Sigmoid colon (tissue), 7 donors: ENCODE measurements at regions of chr10 and their contacts with region 1.

Region 1: DNA sequence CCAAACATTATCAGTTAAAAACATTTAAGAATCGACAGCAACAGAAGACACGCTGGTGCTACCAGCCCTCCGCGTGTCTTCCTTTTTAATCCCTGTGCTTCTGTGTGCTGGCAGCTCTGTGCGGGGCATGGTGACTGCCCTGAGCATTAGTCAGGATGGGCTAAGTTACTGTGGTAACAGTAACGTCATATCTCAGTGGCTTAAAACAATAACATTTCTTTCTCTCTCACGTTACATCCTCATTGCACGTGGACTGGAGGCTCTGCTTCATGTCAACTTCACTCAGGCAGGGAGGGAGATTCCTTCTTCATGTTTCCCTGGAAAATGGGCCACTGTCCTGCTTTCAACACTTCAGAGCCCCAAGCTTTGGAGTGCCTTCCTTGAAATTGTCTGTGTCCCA is 378.5 kb downstream of the CCSER2 start:
- DNase-seq: peak; percentile 79
- H3K4me3 ChIP-seq: no peak overlapping the region
- H3K27ac ChIP-seq: peak overlapping the region in 3 of 4 donors; percentile 55 to 78 (median 73)
- H3K4me1 ChIP-seq: peaks cover 0 to 28% (median 17%) of the 10 kb centered on the region in 4 donors
- H3K27me3 ChIP-seq: no peaks in the 10 kb centered on the region
- CTCF ChIP-seq: no peak
- EP300 ChIP-seq: peak; percentile 60 to 91 (median 89)
- POLR2A ChIP-seq: no peak

Region 2: DNA sequence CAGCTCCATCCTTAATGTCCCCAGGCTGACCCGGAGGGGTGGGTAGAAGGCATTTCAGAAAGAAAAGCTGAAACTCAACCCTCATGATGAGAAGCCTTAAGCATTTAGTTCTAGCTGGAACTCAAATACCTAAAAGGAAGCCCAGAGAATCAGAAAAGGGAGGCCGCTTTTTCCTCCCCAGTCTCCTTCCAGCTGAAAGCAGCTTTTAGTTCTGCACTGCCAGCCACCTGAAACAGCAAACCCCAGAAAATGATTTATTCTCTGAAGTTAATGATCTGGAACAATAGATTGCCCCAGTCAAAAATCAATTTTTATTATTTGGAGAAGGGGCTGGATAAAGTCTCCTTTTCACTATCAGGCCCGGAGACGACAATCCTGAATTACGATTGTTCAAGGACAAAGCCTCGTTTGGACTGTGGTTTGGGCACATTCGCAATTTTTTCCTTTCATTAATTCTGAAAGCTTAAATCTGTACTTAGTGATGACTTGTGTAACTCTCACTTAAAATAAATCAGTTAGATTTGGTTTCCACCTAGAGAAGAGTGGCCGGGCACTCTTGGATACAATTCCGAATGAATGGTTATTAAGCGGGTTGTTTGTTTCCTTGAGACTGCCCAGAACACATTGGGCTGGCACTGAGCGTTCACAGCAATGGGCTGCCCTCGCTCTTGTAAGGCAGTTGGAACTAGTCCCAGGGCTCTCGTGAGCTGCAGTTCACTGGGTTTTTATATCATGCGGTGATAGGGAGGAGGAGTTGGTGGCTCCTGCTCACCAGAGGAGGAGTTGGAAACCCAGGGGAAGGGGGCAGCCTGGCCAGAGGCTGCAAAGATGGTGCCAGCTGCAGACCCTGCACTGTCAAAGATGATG is 116.3 kb before region 1 on chr10:
- intact Hi-C with region 1: loop called (anchors 5 kb)
- DNase-seq: peak; percentile 94
- H3K4me3 ChIP-seq: no peak overlapping the region
- H3K27ac ChIP-seq: peak overlapping the region in 3 of 4 donors; percentile 39 to 54 (median 53)
- H3K4me1 ChIP-seq: peaks cover 0 to 29% (median 8%) of the 10 kb centered on the region in 4 donors
- H3K27me3 ChIP-seq: no peaks in the 10 kb centered on the region
- CTCF ChIP-seq: no peak
- EP300 ChIP-seq: peak; percentile 27 to 87 (median 54)
- POLR2A ChIP-seq: no peak

Region 3: GRCh38 chr10:84676536-84676935 is 30.3 kb before region 1 on chr10:
- intact Hi-C with region 1: no loop called
- DNase-seq: no peak
- H3K4me3 ChIP-seq: no peak overlapping the region
- H3K27ac ChIP-seq: no peak overlapping the region
- H3K4me1 ChIP-seq: no peaks in the 10 kb centered on the region
- H3K27me3 ChIP-seq: no peaks in the 10 kb centered on the region
- CTCF ChIP-seq: no peak
- EP300 ChIP-seq: no peak
- POLR2A ChIP-seq: no peak

Region 4: DNA sequence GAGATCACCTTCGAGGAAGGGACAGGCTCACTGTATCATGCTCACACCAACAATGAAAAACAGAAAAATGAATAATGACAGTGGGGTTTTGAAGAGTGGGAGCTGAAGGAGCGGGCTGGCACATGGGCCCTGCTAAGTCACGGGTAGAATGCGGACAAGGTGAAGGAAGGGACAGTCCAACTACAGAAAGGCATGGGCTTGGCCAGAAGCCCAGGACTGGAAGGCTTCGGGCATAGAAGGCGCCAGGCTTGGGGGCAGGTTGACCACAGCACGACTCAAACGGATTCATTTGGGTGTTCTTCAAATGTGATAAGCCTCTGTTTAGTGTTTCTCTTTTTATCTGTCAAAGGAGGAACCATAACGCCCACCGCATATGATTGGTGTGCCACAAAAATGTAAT is 131.0 kb after region 1 on chr10:
- intact Hi-C with region 1: no loop called
- DNase-seq: no peak
- H3K4me3 ChIP-seq: no peak overlapping the region
- H3K27ac ChIP-seq: no peak overlapping the region
- H3K4me1 ChIP-seq: no peaks in the 10 kb centered on the region
- H3K27me3 ChIP-seq: no peaks in the 10 kb centered on the region
- CTCF ChIP-seq: no peak
- EP300 ChIP-seq: no peak
- POLR2A ChIP-seq: no peak